ENCODE measurements at regions of chr14 and their contacts with region 1.

Region 1: DNA sequence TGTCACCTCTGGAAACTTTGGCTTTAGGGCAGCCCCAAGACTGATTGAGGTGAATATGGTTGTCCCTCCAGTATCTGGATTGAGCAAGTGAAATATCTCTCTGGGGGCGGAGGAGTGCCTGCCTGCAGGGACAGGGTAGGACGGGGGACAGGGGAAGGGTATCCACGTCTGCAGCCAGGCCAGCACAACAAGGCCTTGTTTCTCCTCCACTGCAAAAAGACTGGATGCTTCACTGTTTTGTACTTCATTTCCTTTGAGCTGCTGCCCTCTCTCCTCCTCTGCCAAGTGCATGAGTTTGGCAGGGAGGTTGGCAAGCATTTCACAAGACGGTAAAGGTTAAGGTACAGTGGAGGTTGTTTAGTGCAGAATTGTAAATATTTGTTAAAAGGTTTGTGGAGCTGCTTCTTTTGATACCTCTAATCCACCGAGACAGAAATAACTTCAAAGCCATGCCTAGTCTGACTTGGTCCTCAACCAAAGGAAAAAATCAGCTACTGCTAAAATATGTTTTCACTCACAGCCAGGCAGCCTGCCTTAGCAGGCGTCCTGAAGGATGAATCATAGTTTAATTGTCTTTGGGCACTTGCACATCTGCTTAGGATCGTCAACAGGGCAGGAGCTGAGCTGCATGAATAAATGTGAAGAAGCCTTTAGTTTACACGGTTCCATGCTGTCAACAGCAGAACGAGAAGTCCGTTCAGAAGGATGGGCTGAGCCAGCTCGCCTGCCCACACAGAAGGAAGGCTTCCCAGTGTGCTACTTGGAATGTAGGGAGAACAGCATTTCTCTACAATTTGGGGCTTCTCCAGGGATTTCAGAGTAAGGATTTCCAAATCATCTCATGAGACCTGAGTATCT is 269.7 kb downstream of the TTC6 start:
- DNase-seq: peak in 1 of 2 experiments; percentile 34
- H3K4me3 ChIP-seq: no peak overlapping the region
- H3K4me3 Mint-ChIP-seq: no peak overlapping the region
- H3K27ac Mint-ChIP-seq: peak overlapping the region; percentile 8
- H3K4me1 ChIP-seq: peaks cover 13% of the 10 kb centered on the region; the same call in 1 of the 2 replicates
- H3K4me1 Mint-ChIP-seq: peaks cover 5% of the 10 kb centered on the region
- H3K27me3 ChIP-seq: no peaks in the 10 kb centered on the region
- H3K27me3 Mint-ChIP-seq: no peaks in the 10 kb centered on the region
- CTCF ChIP-seq: no peak

Region 2: DNA sequence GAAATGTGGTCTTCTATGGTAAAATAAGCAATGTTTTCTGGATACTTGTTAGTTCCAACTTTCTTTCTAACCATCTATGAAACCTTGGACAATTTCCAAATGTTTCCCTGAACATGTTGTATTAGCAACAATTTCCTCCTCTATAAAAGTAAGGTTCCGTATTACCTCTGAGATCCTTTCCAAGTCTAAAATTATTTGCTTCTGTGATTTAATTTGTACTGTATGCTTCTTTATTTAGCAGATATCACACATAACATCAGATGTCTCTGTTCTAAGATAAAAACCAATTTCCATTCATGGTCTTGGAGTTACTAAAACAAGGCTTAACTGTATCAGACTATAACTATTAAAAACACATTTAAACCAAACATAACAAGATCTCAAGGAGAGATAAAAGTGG is 447.3 kb before region 1 on chr14:
- CTCF ChIA-PET with region 1: no interaction called
- POLR2A ChIA-PET with region 1: no interaction called
- intact Hi-C with region 1: no loop called
- DNase-seq: no peak
- H3K4me3 ChIP-seq: no peak overlapping the region
- H3K4me3 Mint-ChIP-seq: no peak overlapping the region
- H3K27ac Mint-ChIP-seq: no peak overlapping the region
- H3K4me1 ChIP-seq: peaks cover 37% of the 10 kb centered on the region
- H3K4me1 Mint-ChIP-seq: peaks cover 21% of the 10 kb centered on the region
- H3K27me3 ChIP-seq: no peaks in the 10 kb centered on the region
- H3K27me3 Mint-ChIP-seq: no peaks in the 10 kb centered on the region
- CTCF ChIP-seq: no peak

Region 3: DNA sequence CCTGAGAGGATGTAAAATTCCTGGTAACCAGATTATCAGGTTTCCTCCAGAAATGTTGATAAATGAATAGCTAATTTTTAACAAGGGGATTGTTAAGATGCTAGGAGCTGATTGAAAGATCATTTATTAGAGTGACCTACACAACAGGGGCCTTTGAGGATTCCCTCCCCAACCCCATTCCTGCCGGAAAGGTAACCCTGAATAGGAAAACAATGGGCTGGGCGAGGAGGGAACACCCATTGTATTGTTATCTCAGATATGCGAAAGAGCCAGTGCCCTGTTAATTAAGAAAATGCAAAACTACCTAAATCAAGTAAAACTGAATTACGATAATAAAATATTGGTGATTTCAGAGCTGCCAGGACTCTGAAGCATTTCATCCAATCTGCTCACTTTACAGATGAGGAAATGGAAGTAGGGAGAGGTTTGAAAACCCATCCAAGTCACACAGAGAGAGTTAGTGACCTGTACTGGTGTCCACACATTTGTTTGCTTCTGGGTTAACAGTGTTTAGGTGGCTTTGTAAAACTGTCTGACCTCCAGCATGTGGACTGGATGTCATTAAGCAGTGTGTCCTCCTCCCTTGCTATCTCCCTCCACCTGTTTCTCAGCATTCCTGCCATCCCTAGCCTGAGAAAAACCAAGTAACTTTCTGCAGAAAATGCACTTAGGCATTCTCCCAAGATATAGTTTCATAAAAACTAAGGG is 54.8 kb before region 1 on chr14:
- CTCF ChIA-PET with region 1: no interaction called
- POLR2A ChIA-PET with region 1: no interaction called
- intact Hi-C with region 1: loop called (anchors 2 kb)
- DNase-seq: peak; percentile 36 to 69
- H3K4me3 ChIP-seq: no peak overlapping the region
- H3K4me3 Mint-ChIP-seq: peak overlapping the region; percentile 8
- H3K27ac Mint-ChIP-seq: peak overlapping the region; percentile 64
- H3K4me1 ChIP-seq: peaks cover 20% of the 10 kb centered on the region
- H3K4me1 Mint-ChIP-seq: peaks cover 16% of the 10 kb centered on the region
- H3K27me3 ChIP-seq: no peaks in the 10 kb centered on the region
- H3K27me3 Mint-ChIP-seq: no peaks in the 10 kb centered on the region
- CTCF ChIP-seq: no peak

Region 4: DNA sequence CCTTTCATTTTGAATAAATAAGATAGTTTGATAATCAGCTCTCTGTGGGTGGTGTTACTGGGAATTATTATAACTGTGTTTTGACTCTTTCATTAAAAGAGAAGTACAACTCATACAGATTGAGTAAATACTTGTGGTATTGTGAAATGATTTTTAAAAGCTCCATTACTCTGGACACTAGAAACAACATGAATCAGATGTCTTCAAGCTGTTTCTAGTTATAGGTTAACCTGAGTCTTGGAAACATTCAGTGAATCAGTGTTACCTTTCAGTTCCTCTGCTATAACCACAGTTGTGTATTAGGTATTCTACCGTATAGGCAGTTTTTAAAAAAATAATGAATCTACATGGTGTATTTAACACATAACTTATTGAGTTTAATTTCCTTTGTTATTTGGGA is 214.2 kb after region 1 on chr14:
- CTCF ChIA-PET with region 1: no interaction called
- POLR2A ChIA-PET with region 1: no interaction called
- intact Hi-C with region 1: no loop called
- DNase-seq: no peak
- H3K4me3 ChIP-seq: no peak overlapping the region
- H3K4me3 Mint-ChIP-seq: no peak overlapping the region
- H3K27ac Mint-ChIP-seq: no peak overlapping the region
- H3K4me1 ChIP-seq: no peaks in the 10 kb centered on the region
- H3K4me1 Mint-ChIP-seq: no peaks in the 10 kb centered on the region
- H3K27me3 ChIP-seq: no peaks in the 10 kb centered on the region
- H3K27me3 Mint-ChIP-seq: no peaks in the 10 kb centered on the region
- CTCF ChIP-seq: no peak

Region 5: GRCh38 chr14:38238332-38238731 is 373.2 kb after region 1 on chr14:
- CTCF ChIA-PET with region 1: no interaction called
- POLR2A ChIA-PET with region 1: no interaction called
- intact Hi-C with region 1: no loop called
- DNase-seq: no peak
- H3K4me3 ChIP-seq: no peak overlapping the region
- H3K4me3 Mint-ChIP-seq: no peak overlapping the region
- H3K27ac Mint-ChIP-seq: no peak overlapping the region
- H3K4me1 ChIP-seq: no peaks in the 10 kb centered on the region
- H3K4me1 Mint-ChIP-seq: no peaks in the 10 kb centered on the region
- H3K27me3 ChIP-seq: no peaks in the 10 kb centered on the region
- H3K27me3 Mint-ChIP-seq: peaks cover 2% of the 10 kb centered on the region
- CTCF ChIP-seq: no peak

Measured in Caco-2 (cell line).